CD8-positive, alpha-beta memory T cell (primary cell): ENCODE measurements at regions of chr2 and their contacts with region 1.

Region 1: DNA sequence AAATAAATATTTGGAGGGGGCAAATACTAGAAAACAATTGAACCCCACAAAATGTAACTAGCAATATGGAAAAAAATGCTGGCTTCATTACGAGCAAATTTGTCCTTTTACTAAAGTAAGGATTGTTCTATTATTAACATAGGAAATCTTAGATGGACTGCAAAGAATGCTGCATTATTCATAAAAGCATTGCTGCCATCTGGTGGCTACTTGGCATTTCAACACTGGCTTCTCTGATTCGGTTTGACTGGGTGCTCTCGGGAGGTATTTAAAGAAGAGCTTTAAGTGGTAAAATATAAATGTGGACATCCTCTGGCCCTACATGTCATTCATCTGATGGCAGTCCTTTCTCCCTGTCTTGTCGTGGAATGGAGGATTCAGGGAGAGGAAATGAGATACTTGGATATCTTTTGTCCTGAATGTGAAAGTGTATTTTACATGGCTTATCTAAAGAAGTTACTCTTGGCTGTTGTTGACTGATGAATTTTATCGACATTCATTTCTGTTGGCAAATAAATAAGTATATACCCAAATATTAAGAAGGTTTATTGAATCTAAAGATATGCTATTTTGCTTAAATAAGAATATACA is 130.2 kb downstream of the ARHGAP15 start:
- DNase-seq: peak; percentile 50 to 80 (median 62)
- H3K4me3 ChIP-seq: peak overlapping the region; percentile 37
- H3K4me3 Mint-ChIP-seq: peak overlapping the region; percentile 9 to 84 (median 81)
- H3K27ac ChIP-seq: no peak overlapping the region
- H3K27ac Mint-ChIP-seq: peak overlapping the region; percentile 64 to 93 (median 85)
- H3K4me1 ChIP-seq: peaks cover 96% of the 10 kb centered on the region
- H3K4me1 Mint-ChIP-seq: peaks cover 79 to 97% (median 90%) of the 10 kb centered on the region in 3 donors
- H3K27me3 ChIP-seq: no peaks in the 10 kb centered on the region
- H3K27me3 Mint-ChIP-seq: no peaks in the 10 kb centered on the region

Region 2: DNA sequence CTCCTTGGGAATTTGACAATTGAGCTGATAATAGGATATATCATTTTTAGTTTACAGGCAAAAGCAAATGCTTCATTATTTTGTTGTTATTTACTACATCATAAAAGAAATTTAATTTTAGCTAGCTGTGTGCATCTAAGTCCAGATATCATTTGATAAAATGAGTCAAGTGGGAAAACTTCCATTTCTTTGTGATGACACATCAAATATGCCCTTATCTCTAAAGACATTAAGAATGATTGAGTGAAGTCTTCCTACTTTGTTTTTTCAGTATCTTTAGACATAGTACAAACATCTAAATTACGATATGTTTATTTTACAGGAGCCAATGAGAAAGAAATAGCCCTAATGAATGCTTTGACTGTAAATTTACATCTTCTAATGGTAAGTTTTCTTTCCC is 305.0 kb before region 1 on chr2:
- CTCF ChIA-PET with region 1: no interaction called
- POLR2A ChIA-PET with region 1: no interaction called
- DNase-seq: no peak
- H3K4me3 ChIP-seq: no peak overlapping the region
- H3K4me3 Mint-ChIP-seq: no peak overlapping the region
- H3K27ac ChIP-seq: no peak overlapping the region
- H3K27ac Mint-ChIP-seq: no peak overlapping the region
- H3K4me1 ChIP-seq: no peaks in the 10 kb centered on the region
- H3K4me1 Mint-ChIP-seq: no peaks in the 10 kb centered on the region
- H3K27me3 ChIP-seq: no peaks in the 10 kb centered on the region
- H3K27me3 Mint-ChIP-seq: peaks cover 9 to 35% of the 10 kb centered on the region in 2 donors

Region 3: DNA sequence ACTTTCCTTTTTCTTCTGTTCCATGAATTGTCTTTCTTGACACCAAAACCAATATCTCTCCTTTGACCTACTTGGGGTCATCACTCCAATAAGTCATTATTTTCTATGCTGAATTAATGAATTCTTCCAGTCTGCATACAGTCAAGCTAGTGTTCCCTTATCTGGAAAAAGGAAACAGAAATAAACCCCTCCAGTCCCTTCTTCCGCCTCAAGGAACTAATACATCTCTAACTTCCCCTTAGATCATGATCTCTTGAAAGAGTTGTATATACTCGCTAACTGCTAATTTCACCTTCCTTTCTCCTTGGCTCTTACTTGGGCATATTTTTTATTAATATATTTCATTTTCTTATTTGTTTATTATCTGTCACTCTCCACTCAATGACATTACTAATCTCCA is 137.5 kb before region 1 on chr2:
- CTCF ChIA-PET with region 1: interaction called, 14 read pairs
- POLR2A ChIA-PET with region 1: interaction called, 4 read pairs
- DNase-seq: no peak
- H3K4me3 ChIP-seq: no peak overlapping the region
- H3K4me3 Mint-ChIP-seq: no peak overlapping the region
- H3K27ac ChIP-seq: no peak overlapping the region
- H3K27ac Mint-ChIP-seq: no peak overlapping the region
- H3K4me1 ChIP-seq: peaks cover 57% of the 10 kb centered on the region
- H3K4me1 Mint-ChIP-seq: peaks cover 2 to 9% (median 5%) of the 10 kb centered on the region in 3 donors
- H3K27me3 ChIP-seq: no peaks in the 10 kb centered on the region
- H3K27me3 Mint-ChIP-seq: peaks cover 0 to 5% of the 10 kb centered on the region in 2 donors

Region 4: DNA sequence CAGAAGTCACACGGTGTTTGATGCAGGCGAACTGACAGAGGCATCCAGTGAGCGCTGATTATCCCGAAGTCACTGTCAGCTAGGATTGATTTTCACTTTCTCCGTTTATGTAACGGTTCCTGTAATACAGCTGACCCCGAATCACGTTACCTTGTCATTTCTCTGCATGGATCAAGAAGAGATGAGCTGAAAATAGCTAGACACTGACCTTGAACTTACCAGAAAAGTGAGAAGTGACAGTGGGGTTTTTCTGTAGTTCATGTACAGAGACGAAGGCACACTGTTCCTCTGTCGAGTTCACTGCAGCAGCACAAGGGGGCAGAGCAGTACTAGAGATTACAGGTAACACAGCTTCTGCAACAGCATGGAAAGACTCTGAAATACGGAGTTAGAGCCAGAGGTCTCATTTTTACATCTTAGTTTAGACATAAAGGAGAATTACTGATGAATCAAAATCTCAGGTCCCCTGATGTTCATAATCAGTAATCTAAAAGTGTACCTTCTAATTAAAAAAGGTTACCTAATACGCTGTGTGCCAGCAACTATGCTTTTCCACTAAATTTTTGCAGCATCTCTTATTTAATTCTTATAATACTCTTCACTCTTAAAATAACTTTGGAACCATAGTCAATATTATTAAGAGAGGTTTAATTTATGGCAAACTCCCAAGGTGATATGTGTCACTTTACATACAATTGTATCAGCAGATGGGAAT is 97.2 kb before region 1 on chr2:
- CTCF ChIA-PET with region 1: interaction called, 56 read pairs
- POLR2A ChIA-PET with region 1: no interaction called
- DNase-seq: peak; percentile 31 to 75 (median 55)
- H3K4me3 ChIP-seq: no peak overlapping the region
- H3K4me3 Mint-ChIP-seq: no peak overlapping the region
- H3K27ac ChIP-seq: no peak overlapping the region
- H3K27ac Mint-ChIP-seq: peak overlapping the region in 7 of 8 donors; percentile 13 to 89 (median 66)
- H3K4me1 ChIP-seq: peaks cover 65% of the 10 kb centered on the region
- H3K4me1 Mint-ChIP-seq: peaks cover 82 to 93% (median 91%) of the 10 kb centered on the region in 3 donors
- H3K27me3 ChIP-seq: no peaks in the 10 kb centered on the region
- H3K27me3 Mint-ChIP-seq: no peaks in the 10 kb centered on the region

Region 5: DNA sequence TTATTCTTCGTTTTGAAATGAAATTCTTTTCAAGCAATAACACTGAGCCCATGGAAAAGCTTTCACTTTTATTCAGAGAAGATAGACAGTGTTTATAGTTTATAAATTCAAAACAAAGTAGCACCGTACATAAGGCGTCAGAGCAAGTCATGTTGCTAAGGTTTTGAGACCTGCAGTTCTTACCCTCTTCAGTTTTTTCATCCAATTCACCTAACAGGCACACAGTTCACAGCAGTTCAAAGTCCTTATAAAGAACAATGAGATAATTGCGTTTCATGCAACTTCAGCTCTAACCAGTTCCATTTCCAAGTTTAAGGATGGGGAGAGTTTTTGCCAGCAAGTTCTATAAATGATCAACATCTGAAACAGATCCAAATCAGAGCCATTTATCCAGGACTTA is 33.5 kb before region 1 on chr2:
- CTCF ChIA-PET with region 1: interaction called, 36 read pairs
- POLR2A ChIA-PET with region 1: interaction called, 3 read pairs
- DNase-seq: no peak
- H3K4me3 ChIP-seq: no peak overlapping the region
- H3K4me3 Mint-ChIP-seq: peak overlapping the region in 3 of 7 donors; percentile 8 to 21 (median 9)
- H3K27ac ChIP-seq: no peak overlapping the region
- H3K27ac Mint-ChIP-seq: peak overlapping the region; percentile 14 to 69 (median 46)
- H3K4me1 ChIP-seq: peaks cover 32% of the 10 kb centered on the region
- H3K4me1 Mint-ChIP-seq: peaks cover 40 to 75% (median 71%) of the 10 kb centered on the region in 3 donors
- H3K27me3 ChIP-seq: no peaks in the 10 kb centered on the region
- H3K27me3 Mint-ChIP-seq: no peaks in the 10 kb centered on the region

Region 6: DNA sequence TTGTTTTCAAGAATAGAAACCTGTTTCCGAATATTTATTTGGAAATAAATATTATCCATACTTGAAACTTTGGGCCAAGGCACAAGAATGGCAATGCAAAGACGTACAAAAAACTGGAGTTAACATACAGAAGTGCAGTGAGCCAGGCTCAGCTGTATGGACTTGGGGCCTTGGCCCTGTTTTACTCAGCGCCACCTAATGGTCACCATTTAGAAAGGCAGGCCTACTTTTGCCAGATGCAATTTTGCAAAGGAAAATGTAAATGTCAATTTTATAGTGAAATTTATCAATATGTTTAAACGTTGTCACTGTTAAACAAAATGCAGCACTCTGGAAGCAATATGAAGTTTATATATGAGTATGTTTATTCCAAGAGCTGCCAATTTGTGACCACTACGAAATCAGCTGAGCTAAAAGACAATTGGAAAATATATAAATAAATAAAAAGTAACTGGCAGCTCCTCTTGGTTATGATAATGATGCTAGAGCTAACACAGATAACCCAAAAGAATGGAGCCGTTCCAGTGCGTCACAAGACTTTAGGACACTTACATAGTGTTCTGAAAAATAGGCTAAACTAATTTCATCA is 24.7 kb after region 1 on chr2:
- CTCF ChIA-PET with region 1: interaction called, 12 read pairs
- POLR2A ChIA-PET with region 1: no interaction called
- DNase-seq: peak in 4 of 5 donors; percentile 10 to 50 (median 18)
- H3K4me3 ChIP-seq: no peak overlapping the region
- H3K4me3 Mint-ChIP-seq: peak overlapping the region in 1 of 7 donors; percentile 2
- H3K27ac ChIP-seq: no peak overlapping the region
- H3K27ac Mint-ChIP-seq: peak overlapping the region in 5 of 8 donors; percentile 2 to 62 (median 32)
- H3K4me1 ChIP-seq: peaks cover 8% of the 10 kb centered on the region
- H3K4me1 Mint-ChIP-seq: peaks cover 52 to 82% (median 80%) of the 10 kb centered on the region in 3 donors
- H3K27me3 ChIP-seq: no peaks in the 10 kb centered on the region
- H3K27me3 Mint-ChIP-seq: no peaks in the 10 kb centered on the region